Activated naive CD8-positive, alpha-beta T cell treated with anti-CD3 and anti-CD28 coated beads, Interleukin-2, amount 10 ng/mL, durations not matched to agents 7 days and 5 days (primary cell): ENCODE measurements at regions of chr22 and their contacts with region 1.

Region 1: DNA sequence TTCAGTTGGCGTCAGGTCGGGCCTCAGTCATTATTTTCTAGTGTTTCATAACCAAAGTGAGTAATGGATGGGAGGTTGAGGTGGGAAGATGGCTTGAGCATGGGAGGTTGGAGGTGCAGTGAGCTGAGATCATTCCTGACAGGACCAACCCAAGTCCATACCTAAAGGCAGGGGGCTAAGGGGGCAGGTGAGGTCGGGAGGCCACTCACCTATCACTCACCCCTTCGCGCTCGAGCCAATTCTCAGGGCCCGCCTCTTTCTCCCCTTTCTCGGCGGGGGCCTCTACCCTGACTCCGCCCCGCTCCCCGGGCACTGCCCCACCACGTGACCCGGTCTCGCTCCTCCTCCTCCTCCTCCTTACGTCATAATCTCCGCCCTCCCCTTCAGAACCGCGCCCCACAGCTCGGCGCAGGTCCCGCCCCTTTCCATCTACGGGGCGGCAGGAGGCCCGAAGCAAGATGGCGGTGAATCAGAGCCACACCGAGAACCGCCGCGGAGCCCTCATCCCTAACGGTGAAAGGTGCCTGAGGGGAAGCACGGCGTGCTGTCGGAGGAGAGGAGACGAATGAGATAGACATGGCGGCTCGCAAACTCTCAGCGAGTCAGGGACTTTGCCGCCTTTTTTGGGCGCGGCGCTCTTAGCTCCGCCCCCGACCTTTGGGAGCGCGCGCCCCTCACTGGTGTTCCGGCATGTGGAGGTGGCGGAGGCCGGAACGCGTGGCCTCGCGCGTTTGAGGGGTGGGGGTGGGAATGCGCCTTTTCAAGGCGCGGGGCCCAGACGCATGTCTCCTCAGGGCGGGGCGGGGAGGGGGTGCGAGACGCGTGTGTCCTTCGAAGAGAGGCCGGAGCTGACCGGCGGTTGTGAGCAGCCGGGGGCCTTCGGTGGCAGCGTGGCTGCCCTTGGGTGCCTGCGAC is at the start of gene WBP2NL:
- DNase-seq: peak; percentile 87
- ATAC-seq: peak; percentile 85
- H3K4me3 Mint-ChIP-seq: peak within 1 kb of the TSS; percentile 94
- H3K27ac Mint-ChIP-seq: peak within 1 kb of the TSS; percentile 97
- H3K4me1 Mint-ChIP-seq: peaks cover 22% of the 10 kb centered on the region
- H3K27me3 Mint-ChIP-seq: peaks cover 23% of the 10 kb centered on the region
- total RNA-seq, gene WBP2NL: 2.4 to 2.6 TPM

Region 2: GRCh38 chr22:41946629-41947423 is 51.8 kb before region 1 on chr22 and contains the start of gene CENPM:
- POLR2A ChIA-PET with region 1: interaction called, 10 read pairs
- DNase-seq: peak; percentile 94
- ATAC-seq: peak; percentile 98
- H3K4me3 Mint-ChIP-seq: peak within 1 kb of the TSS; percentile 94
- H3K27ac Mint-ChIP-seq: peak within 1 kb of the TSS; percentile 91
- H3K4me1 Mint-ChIP-seq: peaks cover 31% of the 10 kb centered on the region
- H3K27me3 Mint-ChIP-seq: no peaks in the 10 kb centered on the region
- total RNA-seq, gene CENPM: 45.4 to 53.2 TPM

Region 3: GRCh38 chr22:42070517-42071422 is 72.2 kb after region 1 on chr22 and contains the start of gene NAGA:
- POLR2A ChIA-PET with region 1: interaction called, 13 read pairs
- DNase-seq: peak; percentile 88
- ATAC-seq: peak; percentile 98
- H3K4me3 Mint-ChIP-seq: peak within 1 kb of the TSS; percentile 91
- H3K27ac Mint-ChIP-seq: peak within 1 kb of the TSS; percentile 94
- H3K4me1 Mint-ChIP-seq: peaks cover 20% of the 10 kb centered on the region
- H3K27me3 Mint-ChIP-seq: no peaks in the 10 kb centered on the region
- total RNA-seq, gene NAGA: 15.9 to 18.4 TPM